RWPE1 (cell line): ENCODE measurements at regions of chr1 and their contacts with region 1.

Region 1: DNA sequence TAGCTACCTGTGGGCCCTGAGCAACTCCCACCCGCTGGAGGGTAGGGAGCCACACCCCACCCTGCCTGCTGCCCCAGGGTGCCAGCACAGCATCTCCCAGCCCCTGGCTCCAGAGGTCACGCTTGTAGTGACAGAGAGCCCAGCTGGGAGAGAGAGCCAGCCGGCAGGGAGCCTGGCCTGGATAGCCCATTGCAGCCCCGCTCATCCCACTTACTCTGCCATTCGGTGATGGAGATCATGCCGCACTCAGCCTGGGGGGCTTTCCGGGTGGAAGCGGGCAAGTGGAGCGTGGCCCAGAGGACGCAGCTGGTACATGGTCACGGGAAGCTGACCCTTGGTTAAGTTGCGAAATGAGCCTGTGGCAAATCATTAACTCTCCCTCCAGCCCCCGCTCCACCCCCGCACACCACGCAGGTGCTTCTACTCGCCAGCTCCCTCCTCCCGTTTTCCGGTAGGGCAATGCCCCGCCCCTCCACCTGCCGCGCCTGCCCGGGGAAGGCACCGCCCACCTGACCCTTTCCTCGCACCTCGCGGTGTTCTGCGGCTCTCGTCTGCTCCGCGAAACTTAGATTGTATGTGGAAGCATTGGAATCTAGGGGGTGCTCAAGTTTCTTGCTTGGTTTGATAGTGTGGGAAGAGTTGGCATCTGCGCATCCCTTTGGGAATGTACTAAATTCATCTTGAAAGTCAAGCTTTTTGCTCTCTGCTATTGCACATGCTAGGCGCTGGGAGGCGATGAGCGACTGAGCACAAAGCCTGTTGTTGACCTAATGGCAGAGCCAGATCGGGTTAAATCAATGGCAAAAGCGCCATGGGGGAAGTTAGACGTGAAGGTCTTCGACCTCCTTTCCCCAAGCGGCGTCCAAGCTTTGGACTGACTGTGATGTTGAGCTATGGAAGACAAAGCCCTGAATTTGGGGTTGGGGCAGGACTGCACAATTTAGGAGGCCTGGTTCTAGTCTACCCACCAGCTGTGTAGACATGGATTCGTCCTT is at the start of gene GOLT1A:
- DNase-seq: peak; percentile 67
- H3K27ac ChIP-seq: no peak within 1 kb of the TSS
- CTCF ChIP-seq: peak; percentile 50

Region 2: GRCh38 chr1:204198151-204198994 is 15.6 kb before region 1 on chr1:
- CTCF ChIA-PET with region 1: interaction called, 15 read pairs
- POLR2A ChIA-PET with region 1: no interaction called
- DNase-seq: peak; percentile 93
- H3K27ac ChIP-seq: no peak overlapping the region
- CTCF ChIP-seq: no peak